Posterior vena cava (tissue), 2 donors: ENCODE measurements at regions of chrX and their contacts with region 1.

Region 1: GRCh38 chrX:26262121-26262523 is 46.2 kb downstream of the MAGEB5 start:
- DNase-seq: no peak

Region 2: DNA sequence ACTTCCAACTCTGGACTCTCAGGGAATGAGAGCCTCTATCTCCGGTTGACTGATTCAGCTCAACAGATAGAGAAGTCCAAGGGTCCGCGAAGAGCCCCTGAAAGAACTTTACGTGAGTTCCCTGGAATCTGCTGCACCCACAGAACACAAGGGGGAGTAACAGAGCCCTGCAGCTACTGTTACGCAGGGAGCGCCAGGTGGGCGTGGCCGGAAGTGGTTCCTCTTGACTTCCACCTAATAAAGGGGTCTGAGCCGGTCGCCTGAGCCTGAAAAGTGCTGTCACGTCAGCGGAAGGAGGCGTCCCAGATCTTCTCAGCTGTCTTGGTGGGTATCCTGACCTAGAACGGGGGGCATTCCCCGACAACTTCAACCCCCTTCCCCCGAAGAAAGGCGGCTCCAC is 69.9 kb before region 1 on chrX and contains the start of gene MAGEB6:
- intact Hi-C with region 1: loop called in 1 of 2 experiments (anchors 5 kb)
- DNase-seq: peak; percentile 58
- total RNA-seq, gene MAGEB6: not detected

Region 3: DNA sequence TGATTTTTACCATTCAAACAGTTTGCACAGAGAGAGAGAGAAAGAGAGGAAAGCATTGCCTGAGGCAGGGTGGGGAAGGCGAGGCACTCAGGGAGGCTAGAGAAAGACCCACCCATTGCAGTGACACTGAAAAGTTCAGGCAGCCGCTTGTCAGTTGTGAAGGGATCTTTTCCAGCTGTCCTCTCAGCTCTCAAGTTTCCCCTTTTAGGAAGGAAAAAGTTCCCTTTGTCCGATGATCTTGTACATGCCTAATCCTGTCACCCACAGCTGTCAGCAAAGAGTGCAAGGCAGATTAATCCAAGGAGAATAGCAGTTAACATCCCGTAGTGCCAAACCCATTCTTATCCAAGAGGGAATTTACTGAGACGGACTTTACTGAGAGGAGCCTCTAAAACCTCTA is 208.8 kb after region 1 on chrX:
- intact Hi-C with region 1: no loop called
- DNase-seq: no peak